ENCODE measurements at regions of chr5 and their contacts with region 1.

Region 1: GRCh38 chr5:154610321-154611154 is 132.5 kb upstream of the HAND1 start:
- DNase-seq: peak; percentile 89
- H3K4me3 ChIP-seq: peak overlapping the region; percentile 8 to 63 (median 28)
- H3K27ac ChIP-seq: no peak overlapping the region
- H3K4me1 ChIP-seq: peaks cover 12 to 21% (median 13%) of the 10 kb centered on the region in 6 donors
- H3K27me3 ChIP-seq: peaks cover 5 to 83% (median 36%) of the 10 kb centered on the region in 7 donors
- CTCF ChIP-seq: peak; percentile 43 to 81 (median 74)
- POLR2A ChIP-seq: no peak

Region 2: GRCh38 chr5:154467655-154468354 is 142.7 kb before region 1 on chr5:
- intact Hi-C with region 1: loop called (anchors 2 kb)
- DNase-seq: peak; percentile 94
- H3K4me3 ChIP-seq: no peak overlapping the region
- H3K27ac ChIP-seq: no peak overlapping the region
- H3K4me1 ChIP-seq: peaks cover 0 to 21% (median 6%) of the 10 kb centered on the region in 6 donors
- H3K27me3 ChIP-seq: peaks cover 0 to 63% (median 33%) of the 10 kb centered on the region in 7 donors
- CTCF ChIP-seq: peak; percentile 28 to 95 (median 88)
- POLR2A ChIP-seq: no peak